ENCODE measurements at regions of chr11 and their contacts with region 1.

Region 1: GRCh38 chr11:11944444-11944843 is 64.0 kb downstream of the DKK3 start:
- DNase-seq: no peak
- H3K4me3 ChIP-seq: no peak overlapping the region
- H3K27ac ChIP-seq: no peak overlapping the region
- H3K4me1 ChIP-seq: peaks cover 0 to 4% (median 0%) of the 10 kb centered on the region in 4 donors
- H3K27me3 ChIP-seq: no peaks in the 10 kb centered on the region
- CTCF ChIP-seq: no peak

Region 2: DNA sequence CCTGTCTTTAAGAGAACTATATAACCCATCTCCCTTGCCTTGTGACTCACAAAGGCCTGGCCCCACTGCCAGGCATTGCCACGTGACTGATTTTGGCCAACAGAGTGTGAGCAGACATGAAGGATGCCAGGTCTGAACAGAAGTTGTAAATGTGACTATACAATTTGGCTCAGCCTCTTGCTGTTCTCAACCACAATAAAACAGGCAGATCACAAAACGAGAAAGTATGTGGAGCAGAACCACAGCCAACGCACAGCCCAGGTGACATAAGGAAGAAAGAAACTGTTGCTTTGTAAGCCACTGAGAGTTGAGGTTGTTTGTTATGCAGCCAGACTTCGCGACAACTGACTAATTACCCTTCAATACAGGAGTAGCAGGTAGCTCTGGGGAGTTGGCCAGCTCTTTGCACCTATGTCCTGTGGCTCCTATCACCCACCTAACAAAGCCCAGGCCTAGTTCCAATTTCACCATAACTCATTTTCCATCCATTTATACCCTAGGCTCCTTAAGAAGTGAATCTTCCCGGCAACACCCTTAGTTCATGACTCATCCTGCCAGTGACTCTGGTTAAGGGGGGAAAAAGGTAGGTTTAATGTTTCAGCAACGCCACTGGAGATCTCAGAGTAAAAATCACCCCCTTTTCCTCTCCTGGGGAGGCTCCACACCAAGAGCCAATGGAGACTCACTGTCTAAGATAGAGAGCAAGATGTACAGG is 376.4 kb before region 1 on chr11:
- intact Hi-C with region 1: no loop called
- DNase-seq: no peak
- H3K4me3 ChIP-seq: no peak overlapping the region
- H3K27ac ChIP-seq: peak overlapping the region; percentile 72 to 74
- H3K4me1 ChIP-seq: peaks cover 0 to 64% (median 40%) of the 10 kb centered on the region in 4 donors
- H3K27me3 ChIP-seq: no peaks in the 10 kb centered on the region
- CTCF ChIP-seq: no peak

Region 3: DNA sequence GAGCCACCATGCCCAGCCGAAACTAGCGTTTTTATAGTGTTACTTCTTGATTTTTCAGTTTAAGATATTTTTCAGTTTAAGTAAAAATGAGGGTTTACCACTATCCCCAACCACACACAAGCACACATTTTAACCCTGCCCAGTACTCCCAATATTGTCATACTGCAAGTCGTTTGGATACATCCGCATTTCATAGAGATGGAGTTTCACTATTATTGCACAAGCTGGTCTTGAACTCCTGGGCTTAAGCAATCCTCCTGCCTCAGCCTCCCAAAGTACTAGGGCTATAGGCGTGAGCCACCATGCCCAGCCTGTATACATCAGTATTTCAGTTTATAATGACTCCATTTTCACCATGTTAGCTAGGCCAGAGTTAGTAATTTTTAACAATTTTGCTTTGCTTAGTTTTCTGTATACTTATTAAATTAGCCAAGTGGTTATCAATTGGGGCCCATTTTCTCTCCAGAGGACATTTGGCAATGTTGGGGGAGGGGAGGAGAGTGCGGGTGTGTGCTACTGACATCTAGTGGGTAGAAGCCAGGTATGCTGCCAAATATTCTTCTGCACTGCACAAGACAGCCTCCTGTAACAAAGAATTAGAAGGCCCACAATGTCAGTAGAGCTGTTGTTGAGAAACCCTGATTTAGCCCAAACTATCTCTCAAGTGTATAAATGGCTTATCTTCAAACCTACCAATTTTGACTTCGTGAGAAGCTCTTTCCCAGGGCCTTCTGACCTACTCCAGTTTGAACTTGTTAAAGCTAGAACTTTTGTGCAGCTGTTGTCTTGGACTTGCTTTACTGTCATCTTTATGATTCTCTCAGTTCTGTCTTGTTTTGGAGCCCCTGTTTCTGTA is 95.3 kb before region 1 on chr11:
- intact Hi-C with region 1: no loop called
- DNase-seq: peak in 1 of 2 donors; percentile 46
- H3K4me3 ChIP-seq: no peak overlapping the region
- H3K27ac ChIP-seq: peak overlapping the region; percentile 42 to 65
- H3K4me1 ChIP-seq: peaks cover 0 to 99% (median 44%) of the 10 kb centered on the region in 4 donors
- H3K27me3 ChIP-seq: no peaks in the 10 kb centered on the region
- CTCF ChIP-seq: peak; percentile 38 to 40

Region 4: DNA sequence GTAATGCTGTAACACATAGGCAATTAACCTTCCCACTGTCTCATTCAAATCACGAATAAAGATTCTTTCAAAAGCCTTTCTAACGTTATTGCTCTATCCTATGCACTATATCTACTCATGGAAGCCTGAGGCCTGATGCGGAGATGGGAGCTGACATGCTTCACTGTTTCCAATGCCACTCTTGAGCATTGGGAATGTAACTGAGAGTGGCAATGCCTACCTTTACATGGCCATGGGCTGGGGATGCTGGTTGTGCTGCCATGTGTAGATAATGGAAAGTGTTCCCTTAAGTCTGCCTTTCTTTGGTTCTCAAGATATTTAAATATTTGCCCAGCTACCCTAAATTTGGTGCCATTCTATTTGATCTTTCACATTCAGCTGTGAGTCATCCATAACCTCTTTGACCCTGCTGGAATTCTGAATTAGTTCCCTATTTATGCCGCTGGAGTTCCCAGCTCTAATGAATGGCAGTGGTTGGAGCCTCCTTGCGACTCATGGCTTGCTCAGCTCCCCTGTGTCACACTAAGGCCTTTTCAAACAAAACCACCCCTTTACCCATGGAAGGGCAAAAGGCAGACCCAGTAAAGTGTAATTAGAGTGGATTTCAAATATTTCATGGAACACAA is 85.4 kb after region 1 on chr11:
- intact Hi-C with region 1: loop called (anchors 5 kb)
- DNase-seq: no peak
- H3K4me3 ChIP-seq: no peak overlapping the region
- H3K27ac ChIP-seq: no peak overlapping the region
- H3K4me1 ChIP-seq: no peaks in the 10 kb centered on the region
- H3K27me3 ChIP-seq: no peaks in the 10 kb centered on the region
- CTCF ChIP-seq: no peak